Activated CD8-positive, alpha-beta memory T cell treated with anti-CD3 and anti-CD28 coated beads, Interleukin-2, amount 10 ng/mL, durations not matched to agents 7 days and 5 days (primary cell): ENCODE measurements at regions of chr12 and their contacts with region 1.

Region 1: DNA sequence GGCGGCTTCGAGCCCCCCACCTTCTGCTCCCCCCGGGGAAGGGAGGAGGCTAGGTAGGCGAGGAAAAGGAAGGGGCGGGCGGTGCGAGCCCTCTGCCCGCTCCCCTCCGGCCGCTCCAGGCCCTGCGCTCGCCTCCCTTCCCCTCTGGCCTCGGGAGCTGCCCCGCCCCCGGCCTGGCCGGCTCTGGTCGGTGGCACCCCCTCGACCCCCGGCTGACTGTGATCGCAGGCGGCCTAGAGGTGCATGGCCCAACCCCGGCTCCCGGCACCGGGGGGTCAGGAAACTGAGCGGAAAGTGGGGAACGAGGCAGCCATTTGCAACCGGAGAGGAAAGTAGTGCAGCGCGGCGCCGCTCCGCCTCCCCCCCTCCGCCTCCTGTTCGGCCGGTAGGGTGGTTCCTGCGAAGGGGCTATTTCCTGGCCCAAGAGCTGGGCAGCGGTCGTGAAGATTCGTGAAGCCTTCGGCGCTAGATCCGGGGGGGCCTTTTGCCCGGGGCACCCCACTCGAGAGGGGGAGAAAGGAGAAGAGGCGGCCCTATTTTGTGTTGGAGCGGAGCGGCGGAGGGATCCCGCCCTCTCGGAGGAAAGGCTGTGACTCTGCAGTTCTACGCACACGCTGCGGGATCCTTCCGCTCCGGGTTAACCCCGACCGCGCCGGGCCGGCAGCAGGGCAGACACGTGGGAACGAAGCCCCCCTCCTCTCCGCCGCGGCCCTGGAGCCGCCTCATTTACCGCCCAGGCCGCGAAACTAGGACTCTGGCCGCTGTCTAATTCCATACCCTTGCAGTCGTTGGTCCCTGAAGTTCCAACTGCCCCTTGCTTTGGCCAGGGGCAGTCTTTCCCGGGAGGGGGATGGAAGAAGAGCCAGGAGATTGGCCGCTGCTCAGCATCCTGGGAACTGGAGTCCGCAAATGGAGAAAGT is at the start of gene KMT2D:
- DNase-seq: peak; percentile 92
- ATAC-seq: peak; percentile 82
- H3K4me3 Mint-ChIP-seq: peak within 1 kb of the TSS; percentile 91
- H3K27ac Mint-ChIP-seq: peak within 1 kb of the TSS; percentile 95
- H3K4me1 Mint-ChIP-seq: peaks cover 51% of the 10 kb centered on the region
- H3K27me3 Mint-ChIP-seq: no peaks in the 10 kb centered on the region
- total RNA-seq, gene KMT2D: 107 to 132 TPM

Region 2: DNA sequence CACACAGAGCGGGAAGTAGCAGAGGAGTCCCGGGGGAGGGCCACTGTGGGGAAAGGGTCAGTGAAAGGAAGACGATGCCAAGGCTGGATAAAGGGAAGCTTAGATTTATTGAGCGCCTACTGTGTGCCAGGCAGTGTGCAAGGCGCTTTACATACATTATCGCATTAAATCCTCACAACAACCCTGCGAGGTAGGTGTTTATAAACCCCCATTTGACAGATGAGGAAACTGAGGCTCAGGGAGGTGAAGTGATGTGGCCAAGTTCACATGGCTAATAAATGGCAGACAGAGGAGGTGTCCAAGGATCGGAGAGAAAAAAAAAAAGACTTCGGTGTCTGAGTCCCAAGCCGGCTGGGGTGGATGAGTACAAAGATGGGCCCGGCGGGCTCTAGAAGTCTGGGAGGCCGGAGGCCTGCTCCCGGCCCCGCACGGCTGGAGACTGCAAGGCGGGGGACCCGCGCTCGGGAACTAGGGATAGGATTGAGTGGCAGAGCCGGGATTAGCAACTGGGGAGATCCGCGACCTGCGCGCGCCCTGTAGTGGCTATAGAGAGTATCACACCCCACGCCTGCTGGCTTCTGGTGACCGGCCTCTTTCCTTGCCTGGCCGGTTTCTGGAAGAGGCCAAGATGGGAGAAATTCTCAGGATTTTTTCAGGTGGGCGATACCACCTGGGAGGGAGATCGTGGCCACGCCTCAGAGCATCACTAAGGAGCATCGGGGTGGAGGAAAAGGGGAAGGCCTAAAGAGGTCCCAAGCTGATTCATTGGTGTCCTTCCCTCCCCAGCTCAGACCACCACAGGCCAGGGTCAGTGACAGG is 65.2 kb before region 1 on chr12:
- CTCF ChIA-PET with region 1: interaction called, 17 read pairs
- DNase-seq: peak; percentile 65
- ATAC-seq: peak; percentile 44
- H3K4me3 Mint-ChIP-seq: no peak overlapping the region
- H3K27ac Mint-ChIP-seq: no peak overlapping the region
- H3K4me1 Mint-ChIP-seq: peaks cover 33% of the 10 kb centered on the region
- H3K27me3 Mint-ChIP-seq: peaks cover 60% of the 10 kb centered on the region

Region 3: GRCh38 chr12:49008943-49009342 is 51.6 kb before region 1 on chr12:
- CTCF ChIA-PET with region 1: no interaction called
- DNase-seq: no peak
- ATAC-seq: no peak
- H3K4me3 Mint-ChIP-seq: no peak overlapping the region
- H3K27ac Mint-ChIP-seq: no peak overlapping the region
- H3K4me1 Mint-ChIP-seq: peaks cover 2% of the 10 kb centered on the region
- H3K27me3 Mint-ChIP-seq: no peaks in the 10 kb centered on the region

Region 4: GRCh38 chr12:49079793-49080192 is 19.3 kb after region 1 on chr12:
- CTCF ChIA-PET with region 1: interaction called, 179 read pairs
- DNase-seq: no peak
- ATAC-seq: no peak
- H3K4me3 Mint-ChIP-seq: no peak overlapping the region
- H3K27ac Mint-ChIP-seq: no peak overlapping the region
- H3K4me1 Mint-ChIP-seq: peaks cover 3% of the 10 kb centered on the region
- H3K27me3 Mint-ChIP-seq: peaks cover 7% of the 10 kb centered on the region

Region 5: DNA sequence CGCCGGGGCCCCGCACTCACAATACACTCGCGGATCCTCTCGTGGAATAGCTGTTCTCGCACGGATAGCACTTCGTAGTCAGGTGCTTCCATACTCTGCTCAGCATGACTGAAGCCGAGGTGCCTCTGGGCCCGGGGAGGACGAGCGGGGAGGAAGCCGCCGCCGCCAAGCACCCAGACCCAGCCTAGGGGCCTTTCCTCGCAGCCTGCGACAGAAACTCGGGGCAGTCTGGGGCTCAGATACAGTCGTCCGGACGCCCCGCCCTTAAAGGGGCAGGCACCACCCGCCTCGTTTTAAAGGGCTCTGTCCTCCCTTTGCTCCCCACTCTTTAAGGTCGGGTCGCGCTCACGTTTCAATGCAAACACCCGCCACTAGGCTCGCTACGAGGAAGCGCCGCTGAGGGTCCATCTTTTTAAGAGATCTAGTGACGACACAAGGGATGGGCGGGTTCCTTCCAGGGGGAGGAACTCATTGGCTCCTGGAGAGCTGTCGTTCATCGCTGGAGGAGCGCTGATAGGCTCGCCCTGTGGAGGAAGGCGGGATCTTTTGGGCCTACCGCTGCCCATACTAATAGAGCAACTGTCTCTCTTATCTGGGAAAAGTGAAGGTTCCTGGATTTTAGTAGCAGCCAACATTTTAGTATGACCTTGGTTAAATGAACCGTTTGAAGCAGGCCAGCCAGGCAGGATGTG is 50.1 kb after region 1 on chr12 and contains the start of gene LMBR1L:
- CTCF ChIA-PET with region 1: interaction called, 12 read pairs
- DNase-seq: peak; percentile 99
- ATAC-seq: peak; percentile 97
- H3K4me3 Mint-ChIP-seq: peak within 1 kb of the TSS; percentile 94
- H3K27ac Mint-ChIP-seq: peak within 1 kb of the TSS; percentile 87
- H3K4me1 Mint-ChIP-seq: peaks cover 28% of the 10 kb centered on the region
- H3K27me3 Mint-ChIP-seq: no peaks in the 10 kb centered on the region
- total RNA-seq, gene LMBR1L: 46.9 to 53.4 TPM

Region 6: DNA sequence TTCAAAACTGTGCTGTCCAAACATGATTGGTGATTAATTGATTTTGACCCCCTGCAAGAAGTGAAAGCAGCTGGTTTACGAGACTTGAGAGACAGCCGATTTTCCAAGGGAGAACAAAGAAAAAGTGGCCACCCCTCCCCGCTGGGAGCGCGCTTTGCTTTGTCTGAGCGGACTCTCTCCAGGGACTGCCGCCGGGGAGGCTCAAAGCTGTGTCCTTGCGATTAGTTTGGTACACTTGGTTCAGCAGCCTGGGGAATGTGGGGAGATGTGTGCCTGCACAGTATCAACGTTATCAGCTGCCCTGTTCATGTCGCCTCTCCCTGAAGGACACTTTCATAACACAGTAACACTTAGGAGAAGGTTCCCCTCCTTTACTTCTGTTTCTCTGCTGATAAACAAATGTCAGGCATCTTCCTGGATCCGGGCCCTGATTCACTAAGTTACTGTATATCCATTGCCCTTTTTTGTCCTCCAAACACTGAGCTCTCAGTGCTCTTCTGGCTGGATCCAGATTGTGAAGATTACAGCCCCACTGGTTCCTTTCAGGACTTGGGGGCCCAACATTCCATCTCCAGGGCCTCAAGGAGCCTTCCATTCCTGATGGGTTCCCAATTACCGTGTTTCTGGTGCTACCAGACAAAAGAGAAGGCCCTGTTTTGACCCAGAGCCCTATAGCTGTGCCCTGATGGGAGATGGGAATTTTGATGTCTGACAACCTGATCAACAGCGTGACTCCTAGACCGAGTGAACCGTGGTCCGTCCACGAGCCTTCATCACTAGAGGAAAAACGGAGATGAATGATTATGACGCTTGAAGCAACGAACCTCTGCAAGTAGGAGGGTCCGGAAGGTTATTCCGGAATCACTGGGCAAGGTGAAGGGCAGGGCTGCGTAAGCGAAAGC is 172.7 kb after region 1 on chr12:
- CTCF ChIA-PET with region 1: interaction called, 19 read pairs
- DNase-seq: no peak
- ATAC-seq: no peak
- H3K4me3 Mint-ChIP-seq: no peak overlapping the region
- H3K27ac Mint-ChIP-seq: no peak overlapping the region
- H3K4me1 Mint-ChIP-seq: peaks cover 22% of the 10 kb centered on the region
- H3K27me3 Mint-ChIP-seq: peaks cover 6% of the 10 kb centered on the region